CD8-positive, alpha-beta T cell (primary cell): ENCODE measurements at regions of chr9 and their contacts with region 1.

Region 1: GRCh38 chr9:37197158-37198038 is 77.0 kb downstream of the ZCCHC7 start:
- DNase-seq: peak in 1 of 9 experiments; percentile 18
- ATAC-seq: peak; percentile 11
- H3K4me3 ChIP-seq: no peak overlapping the region
- H3K4me3 Mint-ChIP-seq: no peak overlapping the region
- H3K27ac ChIP-seq: no peak overlapping the region
- H3K27ac Mint-ChIP-seq: peak overlapping the region; percentile 76
- H3K4me1 ChIP-seq: peaks cover 16% of the 10 kb centered on the region
- H3K4me1 Mint-ChIP-seq: peaks cover 50% of the 10 kb centered on the region
- H3K27me3 ChIP-seq: no peaks in the 10 kb centered on the region
- H3K27me3 Mint-ChIP-seq: no peaks in the 10 kb centered on the region
- CTCF ChIP-seq: no peak

Region 2: GRCh38 chr9:37163299-37163698 is 34.1 kb before region 1 on chr9:
- CTCF ChIA-PET with region 1: no interaction called
- POLR2A ChIA-PET with region 1: interaction called, 3 read pairs
- intact Hi-C with region 1: loop called in 1 of 2 experiments (anchors 5 kb)
- DNase-seq: no peak
- ATAC-seq: no peak
- H3K4me3 ChIP-seq: no peak overlapping the region
- H3K4me3 Mint-ChIP-seq: no peak overlapping the region
- H3K27ac ChIP-seq: no peak overlapping the region
- H3K27ac Mint-ChIP-seq: no peak overlapping the region
- H3K4me1 ChIP-seq: no peaks in the 10 kb centered on the region
- H3K4me1 Mint-ChIP-seq: peaks cover 19% of the 10 kb centered on the region
- H3K27me3 ChIP-seq: no peaks in the 10 kb centered on the region
- H3K27me3 Mint-ChIP-seq: no peaks in the 10 kb centered on the region
- CTCF ChIP-seq: no peak